ENCODE measurements at regions of chr7 and their contacts with region 1.

Region 1: GRCh38 chr7:20598459-20599309 is 16.8 kb upstream of the ABCB5 start:
- DNase-seq: no peak
- H3K4me3 Mint-ChIP-seq: no peak overlapping the region
- H3K27ac Mint-ChIP-seq: no peak overlapping the region
- H3K4me1 Mint-ChIP-seq: peaks cover 3% of the 10 kb centered on the region
- H3K27me3 Mint-ChIP-seq: peaks cover 22% of the 10 kb centered on the region

Region 2: DNA sequence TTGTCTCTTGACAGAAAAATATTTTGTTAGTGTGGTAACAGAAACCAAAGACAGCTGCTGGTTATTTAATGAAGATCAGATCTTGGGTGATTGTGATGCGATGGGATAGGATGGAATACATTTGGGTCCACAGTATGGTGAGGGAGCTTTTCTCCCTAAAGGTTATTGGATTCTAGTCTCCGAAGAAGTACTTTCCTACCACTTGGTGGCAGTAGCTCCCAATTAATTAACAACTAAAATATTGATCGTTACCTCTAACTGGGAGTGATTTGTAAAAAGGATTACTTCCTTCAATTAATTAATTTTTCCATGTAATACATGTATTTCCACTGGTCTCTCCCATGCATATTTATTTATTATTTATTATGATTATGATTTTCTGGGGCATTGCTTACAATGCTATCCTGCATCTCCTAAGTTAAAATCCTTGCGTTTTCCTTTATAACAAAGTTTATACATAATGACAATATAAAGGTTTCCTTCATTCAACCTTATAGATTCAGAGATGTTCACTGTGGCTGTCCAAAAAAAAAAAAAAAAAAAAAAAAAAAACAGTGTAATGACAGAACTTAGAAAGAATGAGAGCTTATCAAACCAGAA is 850.8 kb before region 1 on chr7:
- CTCF ChIA-PET with region 1: interaction called, 14 read pairs
- intact Hi-C with region 1: loop called (anchors 1 kb)
- DNase-seq: no peak
- H3K4me3 Mint-ChIP-seq: no peak overlapping the region
- H3K27ac Mint-ChIP-seq: no peak overlapping the region
- H3K4me1 Mint-ChIP-seq: no peaks in the 10 kb centered on the region
- H3K27me3 Mint-ChIP-seq: peaks cover 7% of the 10 kb centered on the region

Region 3: DNA sequence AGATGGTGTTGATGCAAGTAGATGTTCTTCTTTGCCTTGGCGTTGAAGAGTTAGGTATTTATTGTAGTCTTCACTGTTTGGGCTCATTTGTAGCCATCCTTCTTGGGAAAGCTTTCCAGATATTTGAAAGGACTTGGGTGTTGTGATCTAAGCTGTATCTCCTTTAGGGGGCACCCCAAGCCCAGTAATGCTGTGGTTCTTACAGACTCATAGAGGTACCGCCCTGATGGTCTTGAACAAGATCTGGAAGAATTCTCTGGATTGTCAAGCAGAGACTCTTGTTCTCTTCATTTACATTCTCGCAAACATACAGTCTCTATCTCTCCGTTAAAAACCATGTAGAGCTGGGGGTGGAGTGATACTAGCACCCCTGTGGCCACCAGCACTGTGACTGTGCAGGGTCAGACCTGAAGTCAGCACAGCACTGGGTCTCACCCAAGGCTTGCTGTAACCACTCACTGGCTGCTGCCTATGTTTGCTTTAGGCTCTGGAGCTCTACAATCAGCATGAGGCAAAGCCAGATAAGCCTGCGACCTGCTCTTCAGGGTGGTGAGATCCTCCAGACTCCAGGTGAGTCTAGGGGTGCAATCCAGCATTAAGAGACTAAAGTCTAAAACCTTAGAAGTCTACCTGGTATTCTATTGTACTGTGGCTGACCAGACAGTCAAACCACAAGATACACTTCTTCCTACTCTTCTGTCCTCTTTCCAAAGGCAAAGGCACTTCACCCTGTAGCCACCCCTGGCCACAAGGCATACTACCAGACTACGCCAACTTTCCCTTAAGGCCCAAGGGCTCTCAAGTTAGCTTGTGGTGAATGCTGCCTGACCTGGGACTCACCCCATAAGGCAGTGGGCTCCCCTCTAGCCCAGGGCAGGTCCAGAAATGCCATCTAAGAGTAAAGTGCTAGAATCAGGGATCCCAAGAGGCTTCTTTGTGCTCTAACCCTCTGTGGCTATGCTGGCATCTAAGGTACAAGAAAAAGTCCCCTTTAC is 615.5 kb before region 1 on chr7:
- CTCF ChIA-PET with region 1: interaction called, 3 read pairs
- intact Hi-C with region 1: loop called (anchors 2 kb)
- DNase-seq: peak; percentile 14
- H3K4me3 Mint-ChIP-seq: no peak overlapping the region
- H3K27ac Mint-ChIP-seq: no peak overlapping the region
- H3K4me1 Mint-ChIP-seq: no peaks in the 10 kb centered on the region
- H3K27me3 Mint-ChIP-seq: no peaks in the 10 kb centered on the region

Region 4: DNA sequence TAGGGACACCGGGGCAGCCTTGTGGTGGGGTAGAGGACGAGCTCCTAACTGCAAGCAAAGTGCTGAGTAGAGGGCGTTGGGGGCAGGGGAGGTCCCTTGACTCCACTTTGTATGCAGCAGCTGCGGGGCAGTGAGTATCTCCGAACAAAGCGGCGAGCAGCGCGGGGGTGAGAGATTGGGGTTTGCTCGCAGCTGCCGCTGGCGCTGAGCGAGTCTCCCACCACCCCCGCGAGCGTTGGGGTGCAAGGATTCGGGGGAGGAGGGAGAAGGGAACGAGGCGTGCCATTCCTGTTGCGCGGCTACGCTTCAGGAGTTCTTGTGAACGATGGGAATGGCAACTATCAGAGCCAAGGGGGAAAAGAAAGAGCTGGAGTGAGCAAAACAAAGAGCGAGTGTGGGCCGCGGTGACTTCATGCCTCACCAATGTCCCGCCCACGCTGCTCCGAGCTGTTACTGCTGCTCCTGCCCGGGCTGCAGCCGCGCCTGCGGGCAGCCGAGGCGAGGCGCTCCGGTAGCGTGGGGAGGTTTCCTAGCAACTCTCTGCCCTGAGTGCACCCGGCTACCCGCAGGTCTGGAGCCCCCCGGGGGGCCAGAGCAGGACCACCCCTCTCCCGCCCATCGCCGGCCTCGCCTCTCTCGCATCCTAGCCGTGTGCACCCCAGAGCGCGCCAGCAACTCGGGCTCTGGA is 268.3 kb before region 1 on chr7 and contains the start of gene ITGB8:
- CTCF ChIA-PET with region 1: no interaction called
- intact Hi-C with region 1: loop called (anchors 5 kb)
- DNase-seq: peak; percentile 75
- H3K4me3 Mint-ChIP-seq: peak within 1 kb of the TSS; percentile 74
- H3K27ac Mint-ChIP-seq: no peak within 1 kb of the TSS
- H3K4me1 Mint-ChIP-seq: peaks cover 18% of the 10 kb centered on the region
- H3K27me3 Mint-ChIP-seq: peaks cover 46% of the 10 kb centered on the region
- total RNA-seq, gene ITGB8: not detected

Region 5: GRCh38 chr7:20532890-20533289 is 65.8 kb before region 1 on chr7:
- CTCF ChIA-PET with region 1: no interaction called
- intact Hi-C with region 1: no loop called
- DNase-seq: no peak
- H3K4me3 Mint-ChIP-seq: no peak overlapping the region
- H3K27ac Mint-ChIP-seq: no peak overlapping the region
- H3K4me1 Mint-ChIP-seq: no peaks in the 10 kb centered on the region
- H3K27me3 Mint-ChIP-seq: no peaks in the 10 kb centered on the region

Region 6: GRCh38 chr7:20713792-20714191 is 115.1 kb after region 1 on chr7:
- CTCF ChIA-PET with region 1: no interaction called
- intact Hi-C with region 1: no loop called
- DNase-seq: no peak
- H3K4me3 Mint-ChIP-seq: no peak overlapping the region
- H3K27ac Mint-ChIP-seq: no peak overlapping the region
- H3K4me1 Mint-ChIP-seq: no peaks in the 10 kb centered on the region
- H3K27me3 Mint-ChIP-seq: no peaks in the 10 kb centered on the region

Region 7: GRCh38 chr7:20798081-20798693 is 199.5 kb after region 1 on chr7:
- CTCF ChIA-PET with region 1: no interaction called
- intact Hi-C with region 1: no loop called
- DNase-seq: peak; percentile 13
- H3K4me3 Mint-ChIP-seq: peak overlapping the region; percentile 38
- H3K27ac Mint-ChIP-seq: no peak overlapping the region
- H3K4me1 Mint-ChIP-seq: peaks cover 15% of the 10 kb centered on the region
- H3K27me3 Mint-ChIP-seq: peaks cover 61% of the 10 kb centered on the region

Measured in activated naive CD4-positive, alpha-beta T cell treated with anti-CD3 and anti-CD28 coated beads for 36 hours (primary cell).